IMR-90 (cell line): ENCODE measurements at regions of chr14 and their contacts with region 1.

Region 1: GRCh38 chr14:30108975-30109700 is 181.5 kb upstream of the PRKD1 start:
- DNase-seq: peak; percentile 80
- ATAC-seq: peak; percentile 95
- H3K4me3 ChIP-seq: no peak overlapping the region
- H3K27ac ChIP-seq: peak overlapping the region; percentile 67
- H3K4me1 ChIP-seq: peaks cover 2% of the 10 kb centered on the region
- H3K27me3 ChIP-seq: no peaks in the 10 kb centered on the region
- CTCF ChIP-seq: no peak
- POLR2A ChIP-seq: no peak
- RAD21 ChIP-seq: no peak

Region 2: DNA sequence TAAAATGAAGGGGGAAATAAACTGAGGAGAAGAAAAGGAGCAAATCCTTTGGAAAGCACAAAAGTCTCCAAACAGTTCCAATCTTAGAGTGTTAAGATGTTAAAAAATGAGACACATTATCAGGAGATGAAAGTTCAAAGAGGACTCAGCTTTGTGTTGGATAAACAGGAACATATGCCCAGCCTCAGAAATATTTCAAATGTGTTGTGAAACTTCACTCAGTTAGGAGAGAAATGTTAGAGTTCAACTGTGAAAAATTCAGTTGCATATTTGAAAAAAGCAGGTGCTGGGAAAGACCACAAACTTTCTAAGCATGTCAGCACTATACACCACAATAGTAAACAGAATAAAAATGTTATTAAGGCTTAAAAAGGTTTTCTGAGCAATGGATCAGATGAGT is 44.7 kb before region 1 on chr14:
- CTCF ChIA-PET with region 1: no interaction called
- POLR2A ChIA-PET with region 1: no interaction called
- dilution Hi-C with region 1: no loop called
- in situ Hi-C with region 1: no loop called
- intact Hi-C with region 1: loop called (anchors 5 kb)
- DNase-seq: peak; percentile 6
- ATAC-seq: peak; percentile 46
- H3K4me3 ChIP-seq: no peak overlapping the region
- H3K27ac ChIP-seq: no peak overlapping the region
- H3K4me1 ChIP-seq: no peaks in the 10 kb centered on the region; the same call in 1 of the 2 replicates
- H3K27me3 ChIP-seq: no peaks in the 10 kb centered on the region
- CTCF ChIP-seq: no peak
- POLR2A ChIP-seq: no peak
- RAD21 ChIP-seq: no peak

Region 3: DNA sequence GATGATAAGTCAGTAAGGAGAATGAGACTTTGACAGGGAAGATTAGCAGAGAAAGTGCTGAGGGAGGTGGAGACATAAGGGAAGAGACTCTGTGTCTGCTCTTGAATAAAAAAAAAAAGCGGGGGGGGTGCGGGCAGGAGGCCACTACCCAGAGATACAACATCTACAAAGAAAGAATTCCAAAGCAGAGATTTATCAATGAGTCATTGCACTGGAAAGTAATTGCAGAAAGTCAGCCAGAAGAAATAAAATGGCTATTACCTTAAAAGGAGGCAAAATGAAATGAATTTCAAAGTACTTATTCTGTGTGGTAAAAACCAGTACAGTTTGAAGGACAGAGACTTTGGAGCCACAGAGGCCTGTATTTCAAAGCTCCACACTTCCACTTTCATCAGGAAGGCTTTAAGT is 85.6 kb after region 1 on chr14:
- CTCF ChIA-PET with region 1: no interaction called
- POLR2A ChIA-PET with region 1: no interaction called
- dilution Hi-C with region 1: no loop called
- in situ Hi-C with region 1: no loop called
- intact Hi-C with region 1: loop called (anchors 2 kb)
- DNase-seq: peak; percentile 91
- ATAC-seq: peak; percentile 55
- H3K4me3 ChIP-seq: no peak overlapping the region
- H3K27ac ChIP-seq: peak overlapping the region; percentile 82
- H3K4me1 ChIP-seq: peaks cover 13% of the 10 kb centered on the region
- H3K27me3 ChIP-seq: no peaks in the 10 kb centered on the region
- CTCF ChIP-seq: no peak
- POLR2A ChIP-seq: no peak
- RAD21 ChIP-seq: no peak